Activated CD4-positive, alpha-beta T cell treated with anti-CD3 and anti-CD28 coated beads for 36 hours (primary cell): ENCODE measurements at regions of chr19 and their contacts with region 1.

Region 1: GRCh38 chr19:38769635-38770211 is 3.6 kb downstream of the LGALS7 start:
- DNase-seq: peak; percentile 94
- ATAC-seq: peak; percentile 85
- H3K4me3 Mint-ChIP-seq: peak overlapping the region; percentile 32
- H3K27ac Mint-ChIP-seq: peak overlapping the region; percentile 73
- H3K4me1 Mint-ChIP-seq: peaks cover 6% of the 10 kb centered on the region
- H3K27me3 Mint-ChIP-seq: no peaks in the 10 kb centered on the region

Region 2: GRCh38 chr19:38718747-38719543 is 50.8 kb before region 1 on chr19:
- CTCF ChIA-PET with region 1: no interaction called
- POLR2A ChIA-PET with region 1: no interaction called
- intact Hi-C with region 1: no loop called
- DNase-seq: no peak
- ATAC-seq: no peak
- H3K4me3 Mint-ChIP-seq: no peak overlapping the region
- H3K27ac Mint-ChIP-seq: no peak overlapping the region
- H3K4me1 Mint-ChIP-seq: no peaks in the 10 kb centered on the region
- H3K27me3 Mint-ChIP-seq: no peaks in the 10 kb centered on the region

Region 3: GRCh38 chr19:38792250-38793111 is 22.8 kb after region 1 on chr19:
- CTCF ChIA-PET with region 1: interaction called, 9 read pairs
- POLR2A ChIA-PET with region 1: interaction called, 3 read pairs
- intact Hi-C with region 1: loop called in 1 of 2 experiments (anchors 2 kb)
- DNase-seq: peak; percentile 64
- ATAC-seq: peak; percentile 17
- H3K4me3 Mint-ChIP-seq: peak overlapping the region; percentile 10
- H3K27ac Mint-ChIP-seq: no peak overlapping the region
- H3K4me1 Mint-ChIP-seq: peaks cover 4% of the 10 kb centered on the region
- H3K27me3 Mint-ChIP-seq: no peaks in the 10 kb centered on the region

Region 4: DNA sequence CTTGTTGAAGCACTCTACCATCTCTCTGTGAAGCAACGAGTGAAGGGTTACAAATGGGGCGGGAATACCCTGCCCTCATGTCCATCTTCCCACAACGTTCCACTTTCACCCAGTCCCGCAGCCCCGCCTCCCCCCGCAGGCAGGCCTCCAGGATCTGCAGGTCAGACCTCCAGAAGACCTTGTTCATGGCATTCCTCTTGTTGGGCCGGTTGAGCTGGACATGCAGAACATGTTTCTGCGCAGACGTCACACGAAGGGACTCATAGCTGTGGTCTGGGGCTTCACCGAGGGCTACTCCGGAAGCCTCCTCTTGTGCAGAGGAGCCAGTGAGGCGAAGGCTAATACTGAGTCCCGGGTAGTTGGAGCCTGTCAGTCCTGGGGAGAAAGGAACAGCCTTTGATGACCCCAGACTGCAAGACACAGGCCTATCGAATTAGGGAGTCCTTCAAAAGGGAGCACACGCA is 61.5 kb after region 1 on chr19:
- CTCF ChIA-PET with region 1: interaction called, 6 read pairs
- POLR2A ChIA-PET with region 1: no interaction called
- intact Hi-C with region 1: loop called in 1 of 2 experiments (anchors 2 kb)
- DNase-seq: peak; percentile 58
- ATAC-seq: peak; percentile 53
- H3K4me3 Mint-ChIP-seq: peak overlapping the region; percentile 87
- H3K27ac Mint-ChIP-seq: peak overlapping the region; percentile 83
- H3K4me1 Mint-ChIP-seq: peaks cover 25% of the 10 kb centered on the region
- H3K27me3 Mint-ChIP-seq: no peaks in the 10 kb centered on the region

Region 5: GRCh38 chr19:38869856-38870607 is 100.3 kb after region 1 on chr19:
- CTCF ChIA-PET with region 1: no interaction called
- POLR2A ChIA-PET with region 1: no interaction called
- intact Hi-C with region 1: loop called in 1 of 2 experiments (anchors 5 kb)
- DNase-seq: peak; percentile 94
- ATAC-seq: peak; percentile 85
- H3K4me3 Mint-ChIP-seq: peak overlapping the region; percentile 76
- H3K27ac Mint-ChIP-seq: peak overlapping the region; percentile 86
- H3K4me1 Mint-ChIP-seq: peaks cover 37% of the 10 kb centered on the region
- H3K27me3 Mint-ChIP-seq: no peaks in the 10 kb centered on the region

Region 6: GRCh38 chr19:38952395-38953165 is 182.9 kb after region 1 on chr19:
- CTCF ChIA-PET with region 1: no interaction called
- POLR2A ChIA-PET with region 1: no interaction called
- intact Hi-C with region 1: no loop called
- DNase-seq: peak; percentile 58
- ATAC-seq: peak; percentile 52
- H3K4me3 Mint-ChIP-seq: no peak overlapping the region
- H3K27ac Mint-ChIP-seq: no peak overlapping the region
- H3K4me1 Mint-ChIP-seq: peaks cover 14% of the 10 kb centered on the region
- H3K27me3 Mint-ChIP-seq: peaks cover 15% of the 10 kb centered on the region